A549 (cell line): ENCODE measurements at regions of chr3 and their contacts with region 1.

Region 1: DNA sequence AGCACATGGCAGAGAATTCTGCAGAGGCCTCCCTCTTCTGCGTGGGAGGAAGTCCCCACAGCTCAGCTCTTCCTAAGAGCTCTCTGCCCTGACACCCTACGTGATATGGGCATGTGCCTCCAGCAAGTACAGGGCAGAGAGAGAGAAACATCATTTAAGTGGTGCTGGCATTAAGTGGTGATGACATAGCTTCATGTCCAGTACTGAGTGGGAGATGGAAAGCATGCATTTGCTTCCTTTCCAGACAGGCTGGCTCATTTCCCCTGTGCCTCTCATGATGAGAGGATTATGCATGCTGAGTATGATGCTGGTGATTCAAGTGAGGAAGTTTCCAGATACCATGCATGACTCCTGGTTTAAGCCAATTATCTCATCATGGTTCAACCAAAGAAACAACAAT is 26.9 kb downstream of the BFSP2 start:
- DNase-seq: no peak
- ATAC-seq: no peak
- H3K4me3 ChIP-seq: no peak overlapping the region
- H3K27ac ChIP-seq: no peak overlapping the region
- H3K4me1 ChIP-seq: no peaks in the 10 kb centered on the region
- CTCF ChIP-seq: no peak
- EP300 ChIP-seq: no peak
- POLR2A ChIP-seq: no peak
- RAD21 ChIP-seq: no peak

Region 2: DNA sequence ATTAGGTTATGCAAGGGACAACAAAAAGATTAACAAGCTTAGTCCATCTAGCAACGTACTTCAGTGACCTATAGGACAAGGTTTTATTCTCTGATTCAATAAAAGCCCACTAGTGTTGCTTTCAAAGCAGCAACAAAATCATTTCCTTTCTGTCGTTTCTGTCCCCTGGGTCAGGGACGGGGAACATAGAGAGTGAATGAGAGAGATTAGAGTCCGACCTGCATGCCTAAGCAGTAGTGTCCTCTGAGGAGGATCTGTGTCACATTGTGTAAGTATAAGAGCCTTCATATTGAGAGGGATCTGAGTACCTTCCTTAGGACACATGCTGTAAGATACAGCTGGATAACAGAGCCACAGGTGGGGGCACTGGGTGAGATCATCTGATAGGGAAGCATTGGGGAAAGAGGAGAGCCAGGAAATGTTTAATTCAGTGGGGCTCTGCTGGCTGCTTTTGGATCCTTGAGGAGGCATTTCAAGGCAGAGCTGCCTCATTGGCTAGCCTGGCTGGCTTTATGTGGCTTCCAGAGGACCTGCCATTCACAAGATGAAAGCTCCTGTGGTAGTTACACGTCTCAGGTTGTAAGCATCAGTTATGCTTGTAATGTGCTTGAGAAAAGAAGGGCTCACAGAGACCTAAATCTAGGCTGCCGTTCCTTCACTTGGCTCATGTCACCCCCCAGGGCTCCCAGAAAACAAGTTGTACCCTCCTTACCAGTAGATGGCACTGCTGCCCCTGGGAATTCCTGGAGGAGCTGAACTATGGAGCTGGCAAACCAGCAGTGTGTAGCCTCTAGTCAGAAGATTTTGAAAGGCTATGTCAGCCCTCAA is 385.8 kb before region 1 on chr3:
- CTCF ChIA-PET with region 1: interaction called, 21 read pairs
- POLR2A ChIA-PET with region 1: no interaction called
- DNase-seq: peak; percentile 51 to 67
- ATAC-seq: peak; percentile 88 to 89
- H3K4me3 ChIP-seq: no peak overlapping the region
- H3K27ac ChIP-seq: no peak overlapping the region
- H3K4me1 ChIP-seq: peaks cover 7% of the 10 kb centered on the region; the same call in 1 of the 3 replicates
- CTCF ChIP-seq: peak; percentile 57
- EP300 ChIP-seq: no peak
- POLR2A ChIP-seq: no peak
- RAD21 ChIP-seq: peak; percentile 67 to 78

Region 3: DNA sequence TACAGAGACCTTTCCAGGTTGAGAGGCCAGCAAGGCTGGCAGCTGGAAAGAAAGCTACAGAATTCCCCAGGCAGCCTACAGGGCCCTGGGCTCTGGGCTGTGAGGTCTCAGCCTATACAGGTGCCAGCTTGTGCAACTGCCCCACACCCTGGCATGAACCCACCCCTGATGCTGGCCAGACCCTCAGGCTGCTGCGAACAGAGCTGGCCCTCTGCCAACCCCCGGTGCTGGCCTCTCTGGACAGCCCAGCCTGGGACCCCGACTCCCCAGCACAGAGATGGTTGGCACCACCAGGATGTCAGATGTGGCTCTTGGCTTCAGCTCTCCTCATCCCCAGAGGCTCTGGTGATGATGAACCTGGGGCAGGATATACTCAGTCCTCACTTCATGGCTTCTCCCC is 38.0 kb before region 1 on chr3:
- CTCF ChIA-PET with region 1: no interaction called
- POLR2A ChIA-PET with region 1: no interaction called
- DNase-seq: no peak
- ATAC-seq: no peak
- H3K4me3 ChIP-seq: no peak overlapping the region
- H3K27ac ChIP-seq: no peak overlapping the region
- H3K4me1 ChIP-seq: no peaks in the 10 kb centered on the region
- CTCF ChIP-seq: no peak
- EP300 ChIP-seq: no peak
- POLR2A ChIP-seq: no peak
- RAD21 ChIP-seq: no peak

Region 4: DNA sequence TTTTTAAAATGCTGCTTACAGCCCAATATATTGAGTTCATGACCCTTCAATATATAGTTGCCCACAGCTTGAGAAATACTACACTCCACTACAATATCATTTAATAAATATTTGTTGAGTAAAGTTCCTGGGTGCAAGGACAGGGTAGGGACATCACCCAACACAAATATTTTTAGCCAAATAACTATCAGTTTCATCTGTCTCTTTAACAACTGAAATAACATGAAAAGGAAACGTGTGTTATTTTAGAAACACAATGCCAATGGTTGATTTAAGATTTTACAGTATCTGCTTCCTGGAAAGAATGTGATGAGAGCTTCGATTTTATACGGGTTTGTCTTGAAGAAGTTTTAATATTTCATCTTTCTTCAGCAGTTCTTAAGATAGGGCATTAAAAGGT is 79.1 kb after region 1 on chr3:
- CTCF ChIA-PET with region 1: no interaction called
- POLR2A ChIA-PET with region 1: no interaction called
- DNase-seq: no peak
- ATAC-seq: no peak
- H3K4me3 ChIP-seq: no peak overlapping the region
- H3K27ac ChIP-seq: no peak overlapping the region
- H3K4me1 ChIP-seq: 0 out of 3 replicates have a peak, but pooled peaks cover 5% of the 10 kb centered on the region
- CTCF ChIP-seq: no peak
- EP300 ChIP-seq: no peak
- POLR2A ChIP-seq: no peak
- RAD21 ChIP-seq: no peak

Region 5: DNA sequence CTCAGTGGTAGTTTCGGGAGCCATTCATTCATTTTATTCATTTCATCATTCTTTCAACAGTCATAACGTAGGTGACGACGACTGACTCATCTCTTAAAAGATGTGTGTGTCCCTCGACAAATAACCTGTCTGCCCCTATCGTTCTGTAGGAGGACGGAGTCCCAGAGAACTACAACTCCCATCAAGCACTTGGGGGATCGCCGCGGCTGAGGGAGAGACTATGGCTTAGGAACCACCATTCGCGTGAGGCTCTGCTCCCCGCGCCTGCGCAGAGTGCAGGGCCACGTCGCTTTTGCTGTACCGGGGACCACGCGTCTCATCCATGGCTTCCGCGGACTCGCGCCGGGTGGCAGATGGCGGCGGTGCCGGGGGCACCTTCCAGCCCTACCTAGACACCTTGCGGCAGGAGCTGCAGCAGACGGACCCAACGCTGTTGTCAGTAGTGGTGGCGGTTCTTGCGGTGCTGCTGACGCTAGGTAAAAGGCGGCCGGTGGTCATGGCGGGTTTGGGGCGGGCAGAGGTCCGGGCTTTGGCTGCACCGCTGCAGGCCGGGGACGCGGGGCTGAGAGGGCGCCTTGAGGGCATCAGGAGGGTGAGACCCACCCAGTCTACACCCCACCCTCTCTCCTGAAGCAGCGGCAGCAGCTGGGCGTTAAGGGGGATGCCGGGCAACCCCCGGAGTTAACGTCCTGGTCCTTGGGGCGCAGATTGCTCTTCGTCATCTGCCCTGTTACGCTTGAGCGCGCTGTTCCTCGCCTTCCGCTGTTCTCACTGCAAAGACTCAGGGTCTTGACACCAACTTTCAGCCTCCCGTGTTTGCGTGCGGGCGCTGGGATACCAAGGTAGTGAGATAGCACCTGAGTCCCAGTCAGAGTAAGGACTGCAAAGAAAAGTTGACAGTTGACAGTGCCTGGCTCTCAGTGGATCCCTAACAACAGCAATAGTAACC is 379.1 kb after region 1 on chr3 and contains the start of gene SRPRB:
- CTCF ChIA-PET with region 1: no interaction called
- POLR2A ChIA-PET with region 1: no interaction called
- DNase-seq: peak; percentile 91 to 92
- ATAC-seq: peak; percentile 99 to 100
- H3K4me3 ChIP-seq: peak within 1 kb of the TSS; percentile 80
- H3K27ac ChIP-seq: peak within 1 kb of the TSS; percentile 85 to 93
- H3K4me1 ChIP-seq: peaks cover 8% of the 10 kb centered on the region; the same call in 2 of the 3 replicates
- CTCF ChIP-seq: no peak
- EP300 ChIP-seq: no peak
- POLR2A ChIP-seq: peak; percentile 87
- RAD21 ChIP-seq: no peak
- polyA plus RNA-seq, gene SRPRB: 61.8 and 64.6 TPM in 2 replicates